ENCODE measurements at regions of chr10 and their contacts with region 1.

Region 1: GRCh38 chr10:103598654-103599115 is 105.2 kb downstream of the NEURL1 start:
- DNase-seq: peak; percentile 80 to 95
- ATAC-seq: peak; percentile 86 to 96
- H3K4me3 ChIP-seq: no peak overlapping the region
- H3K27ac ChIP-seq: peak overlapping the region in 1 of 2 experiments; percentile 74; a peak in 3 of 6 replicates
- H3K4me1 ChIP-seq: peaks cover 5% of the 10 kb centered on the region
- CTCF ChIP-seq: peak; percentile 84
- EP300 ChIP-seq: no peak
- POLR2A ChIP-seq: no peak
- RAD21 ChIP-seq: peak; percentile 87 to 88

Region 2: GRCh38 chr10:103139803-103140202 is 458.9 kb before region 1 on chr10:
- CTCF ChIA-PET with region 1: no interaction called
- POLR2A ChIA-PET with region 1: no interaction called
- DNase-seq: peak in 1 of 2 experiments; percentile 28
- ATAC-seq: peak; percentile 24 to 53; a peak in 3 of 6 replicates
- H3K4me3 ChIP-seq: no peak overlapping the region
- H3K27ac ChIP-seq: peak overlapping the region in 1 of 2 experiments; percentile 24; a peak in 1 of 6 replicates
- H3K4me1 ChIP-seq: peaks cover 26% of the 10 kb centered on the region; the same call in 2 of the 3 replicates
- CTCF ChIP-seq: no peak
- EP300 ChIP-seq: no peak
- POLR2A ChIP-seq: no peak
- RAD21 ChIP-seq: no peak

Region 3: DNA sequence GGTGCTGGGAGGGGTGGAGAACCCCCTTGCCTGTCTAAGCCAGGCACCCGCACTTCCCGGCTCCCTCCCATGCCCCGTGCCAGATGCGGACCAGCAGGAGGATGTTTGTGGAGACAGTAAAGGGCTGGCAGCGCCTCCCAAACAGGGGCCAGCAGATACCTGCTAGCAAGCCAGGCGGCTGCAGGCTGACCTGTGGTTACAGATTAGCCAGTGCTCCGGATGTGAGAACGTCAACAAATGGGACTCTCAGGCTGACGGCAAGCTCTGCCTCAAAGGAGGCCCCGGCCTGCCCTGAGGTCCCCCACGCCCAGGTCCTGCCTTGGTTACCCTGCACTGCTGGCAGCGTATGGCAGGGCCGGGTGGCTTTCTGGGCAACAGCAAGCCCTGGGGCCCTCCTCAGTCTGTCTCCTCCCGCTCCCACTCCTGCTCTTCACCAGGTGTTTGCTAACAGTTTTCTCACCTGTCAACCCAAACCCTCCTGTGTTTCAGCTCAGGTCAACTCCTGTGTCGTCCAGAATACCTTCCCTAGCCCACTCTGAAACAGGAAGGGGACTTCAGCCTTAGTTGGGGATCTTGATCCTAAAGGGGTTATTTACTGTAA is 19.8 kb before region 1 on chr10:
- CTCF ChIA-PET with region 1: interaction called, 100 read pairs
- POLR2A ChIA-PET with region 1: no interaction called
- DNase-seq: peak; percentile 33 to 39
- ATAC-seq: peak; percentile 37 to 50; a peak in 3 of 6 replicates
- H3K4me3 ChIP-seq: no peak overlapping the region
- H3K27ac ChIP-seq: peak overlapping the region in 1 of 2 experiments; percentile 52; a peak in 3 of 6 replicates
- H3K4me1 ChIP-seq: peaks cover 30% of the 10 kb centered on the region
- CTCF ChIP-seq: no peak
- EP300 ChIP-seq: no peak
- POLR2A ChIP-seq: no peak
- RAD21 ChIP-seq: no peak

Region 4: GRCh38 chr10:103612462-103613365 is 14.0 kb after region 1 on chr10:
- CTCF ChIA-PET with region 1: interaction called, 21 read pairs
- POLR2A ChIA-PET with region 1: no interaction called
- DNase-seq: no peak
- ATAC-seq: no peak
- H3K4me3 ChIP-seq: no peak overlapping the region
- H3K27ac ChIP-seq: no peak overlapping the region
- H3K4me1 ChIP-seq: no peaks in the 10 kb centered on the region
- CTCF ChIP-seq: no peak
- EP300 ChIP-seq: no peak
- POLR2A ChIP-seq: no peak
- RAD21 ChIP-seq: no peak

Region 5: GRCh38 chr10:103618575-103619423 is 20.1 kb after region 1 on chr10:
- CTCF ChIA-PET with region 1: interaction called, 18 read pairs
- POLR2A ChIA-PET with region 1: no interaction called
- DNase-seq: no peak
- ATAC-seq: no peak
- H3K4me3 ChIP-seq: no peak overlapping the region
- H3K27ac ChIP-seq: no peak overlapping the region
- H3K4me1 ChIP-seq: no peaks in the 10 kb centered on the region
- CTCF ChIP-seq: no peak
- EP300 ChIP-seq: no peak
- POLR2A ChIP-seq: no peak
- RAD21 ChIP-seq: no peak

Region 6: DNA sequence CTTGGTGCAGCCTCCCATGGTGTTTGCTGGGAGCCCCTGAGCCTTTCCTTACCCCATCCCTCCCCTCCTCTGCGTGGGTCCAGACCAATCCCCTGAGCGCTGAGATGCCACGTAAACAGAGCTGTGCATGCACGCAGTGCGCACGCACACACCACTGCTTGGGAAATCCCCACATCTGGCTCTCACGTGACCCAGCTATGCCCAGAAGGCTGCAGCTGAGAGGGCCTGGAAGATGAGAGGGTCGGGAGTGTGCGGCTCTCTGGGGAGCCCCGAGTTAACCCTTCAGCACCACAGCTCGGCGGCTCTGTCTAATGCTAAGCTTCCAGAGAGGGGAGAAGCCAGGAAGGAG is 79.5 kb after region 1 on chr10:
- CTCF ChIA-PET with region 1: interaction called, 265 read pairs
- POLR2A ChIA-PET with region 1: no interaction called
- DNase-seq: no peak
- ATAC-seq: no peak
- H3K4me3 ChIP-seq: no peak overlapping the region
- H3K27ac ChIP-seq: no peak overlapping the region; a peak in 1 of 6 replicates
- H3K4me1 ChIP-seq: peaks cover 21% of the 10 kb centered on the region
- CTCF ChIP-seq: no peak
- EP300 ChIP-seq: no peak
- POLR2A ChIP-seq: no peak
- RAD21 ChIP-seq: no peak

Region 7: DNA sequence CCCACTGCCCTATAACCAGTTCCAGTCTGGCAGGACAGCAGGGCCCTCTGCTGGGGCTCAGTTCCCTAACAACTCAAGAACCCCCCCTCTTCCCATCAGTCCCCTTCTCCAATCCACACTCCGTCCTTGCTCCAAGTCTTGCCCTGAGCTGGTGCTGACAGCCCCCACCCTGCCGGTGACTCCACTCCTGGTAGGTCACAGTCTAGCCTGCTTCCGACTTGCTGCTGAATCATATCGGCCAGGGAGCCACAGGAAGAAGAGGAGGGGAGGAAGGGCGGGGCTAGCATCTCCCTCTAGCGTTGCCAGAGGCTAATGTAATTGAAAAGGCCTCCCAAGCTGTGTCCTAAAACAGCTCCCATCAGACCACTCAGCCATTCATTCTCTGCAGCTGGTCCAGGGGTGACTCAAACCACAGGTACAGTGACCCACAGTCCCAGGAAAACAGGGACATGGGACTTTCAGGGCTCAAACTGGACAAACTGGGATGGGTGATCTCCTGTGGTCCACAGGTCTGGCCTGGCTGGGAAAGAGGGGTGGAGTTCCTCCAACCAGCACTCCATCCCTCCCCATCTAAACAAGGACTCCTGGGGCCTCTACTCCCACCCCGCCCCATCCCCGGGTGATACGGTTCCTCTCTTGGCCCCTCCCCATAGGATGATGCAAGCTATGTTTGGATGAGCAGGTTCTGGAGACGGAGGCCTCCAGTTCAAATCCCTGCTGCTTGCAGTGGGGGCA is 97.9 kb after region 1 on chr10:
- CTCF ChIA-PET with region 1: interaction called, 265 read pairs
- POLR2A ChIA-PET with region 1: no interaction called
- DNase-seq: peak; percentile 91 to 95
- ATAC-seq: peak; percentile 82 to 90
- H3K4me3 ChIP-seq: 0 out of 3 replicates have a peak overlapping the region, but pooled peaks have one; percentile 7
- H3K27ac ChIP-seq: peak overlapping the region; percentile 90 to 91
- H3K4me1 ChIP-seq: peaks cover 61% of the 10 kb centered on the region
- CTCF ChIP-seq: peak; percentile 34
- EP300 ChIP-seq: no peak
- POLR2A ChIP-seq: no peak
- RAD21 ChIP-seq: peak; percentile 15 to 18; a peak in 1 of 5 replicates